Activated B cell treated with CpG ODN at 0.5 μM for 24 hours (primary cell): ENCODE measurements at regions of chr16 and their contacts with region 1.

Region 1: GRCh38 chr16:28863929-28864793 is 518 bp downstream of the SH2B1 start:
- DNase-seq: no peak
- ATAC-seq: no peak
- H3K4me3 Mint-ChIP-seq: peak overlapping the region; percentile 98
- H3K27ac Mint-ChIP-seq: peak overlapping the region; percentile 98
- H3K4me1 Mint-ChIP-seq: peaks cover 24% of the 10 kb centered on the region
- H3K27me3 Mint-ChIP-seq: no peaks in the 10 kb centered on the region
- CTCF ChIP-seq: no peak

Region 2: DNA sequence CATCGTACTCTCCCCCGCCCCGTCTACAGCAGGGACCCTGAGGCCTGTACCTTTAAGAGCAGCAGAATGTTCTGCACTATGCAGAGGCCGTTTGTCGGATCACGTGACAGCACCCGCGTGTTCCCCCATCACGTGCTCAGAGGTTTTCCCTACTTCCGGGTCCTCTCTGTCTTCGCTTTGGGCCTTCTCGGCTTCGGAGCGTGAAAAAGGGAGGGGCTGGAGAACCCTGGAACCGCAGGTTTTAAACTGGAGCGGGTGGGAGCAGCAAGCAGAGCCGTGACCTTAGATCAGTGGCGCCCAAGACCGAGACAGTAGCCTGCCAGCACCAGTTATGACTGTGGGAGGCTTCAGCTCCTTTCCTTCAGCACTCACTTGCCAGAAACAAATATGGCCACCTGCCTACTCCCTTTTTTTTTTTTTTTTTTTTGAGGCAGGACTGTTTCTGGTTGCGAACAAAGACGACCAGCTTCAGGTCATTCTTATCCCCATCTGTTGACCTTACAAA is 372.1 kb before region 1 on chr16 and contains the start of gene CLN3:
- CTCF ChIA-PET with region 1: no interaction called
- POLR2A ChIA-PET with region 1: interaction called, 3 read pairs
- intact Hi-C with region 1: loop called (anchors 5 kb)
- DNase-seq: peak; percentile 80
- ATAC-seq: peak; percentile 72
- H3K4me3 Mint-ChIP-seq: peak within 1 kb of the TSS; percentile 96
- H3K27ac Mint-ChIP-seq: peak within 1 kb of the TSS; percentile 100
- H3K4me1 Mint-ChIP-seq: peaks cover 48% of the 10 kb centered on the region
- H3K27me3 Mint-ChIP-seq: no peaks in the 10 kb centered on the region
- CTCF ChIP-seq: no peak
- total RNA-seq, gene CLN3: 27.9 and 32.0 TPM in 2 replicates

Region 3: GRCh38 chr16:28610595-28611191 is 253.5 kb before region 1 on chr16:
- CTCF ChIA-PET with region 1: no interaction called
- POLR2A ChIA-PET with region 1: no interaction called
- intact Hi-C with region 1: no loop called
- DNase-seq: no peak
- ATAC-seq: no peak
- H3K4me3 Mint-ChIP-seq: no peak overlapping the region
- H3K27ac Mint-ChIP-seq: no peak overlapping the region
- H3K4me1 Mint-ChIP-seq: no peaks in the 10 kb centered on the region
- H3K27me3 Mint-ChIP-seq: no peaks in the 10 kb centered on the region
- CTCF ChIP-seq: no peak

Region 4: GRCh38 chr16:28879841-28880588 is 15.9 kb after region 1 on chr16:
- CTCF ChIA-PET with region 1: interaction called, 4 read pairs
- POLR2A ChIA-PET with region 1: interaction called, 20 read pairs
- intact Hi-C with region 1: loop called (anchors 2 kb)
- DNase-seq: peak; percentile 71
- ATAC-seq: peak; percentile 98
- H3K4me3 Mint-ChIP-seq: peak overlapping the region; percentile 89
- H3K27ac Mint-ChIP-seq: peak overlapping the region; percentile 59
- H3K4me1 Mint-ChIP-seq: peaks cover 14% of the 10 kb centered on the region
- H3K27me3 Mint-ChIP-seq: peaks cover 5% of the 10 kb centered on the region
- CTCF ChIP-seq: no peak

Region 5: GRCh38 chr16:28943281-28943680 is 79.1 kb after region 1 on chr16:
- CTCF ChIA-PET with region 1: interaction called, 25 read pairs
- POLR2A ChIA-PET with region 1: interaction called, 8 read pairs
- intact Hi-C with region 1: loop called (anchors 1 kb)
- DNase-seq: no peak
- ATAC-seq: no peak
- H3K4me3 Mint-ChIP-seq: no peak overlapping the region
- H3K27ac Mint-ChIP-seq: peak overlapping the region; percentile 8
- H3K4me1 Mint-ChIP-seq: peaks cover 11% of the 10 kb centered on the region
- H3K27me3 Mint-ChIP-seq: no peaks in the 10 kb centered on the region
- CTCF ChIP-seq: no peak

Region 6: GRCh38 chr16:28974437-28975157 is 110.4 kb after region 1 on chr16 and contains the start of gene SPNS1:
- CTCF ChIA-PET with region 1: no interaction called
- POLR2A ChIA-PET with region 1: interaction called, 24 read pairs
- intact Hi-C with region 1: no loop called
- DNase-seq: peak; percentile 91
- ATAC-seq: peak; percentile 91
- H3K4me3 Mint-ChIP-seq: peak within 1 kb of the TSS; percentile 94
- H3K27ac Mint-ChIP-seq: peak within 1 kb of the TSS; percentile 94
- H3K4me1 Mint-ChIP-seq: peaks cover 31% of the 10 kb centered on the region
- H3K27me3 Mint-ChIP-seq: no peaks in the 10 kb centered on the region
- CTCF ChIP-seq: no peak
- total RNA-seq, gene SPNS1: 26.6 and 29.2 TPM in 2 replicates